ENCODE measurements at regions of chr7 and their contacts with region 1.

Region 1: GRCh38 chr7:100132697-100133151 is 6.0 kb downstream of the MBLAC1 start:
- DNase-seq: peak; percentile 65 to 76 (median 69)
- H3K4me3 ChIP-seq: no peak overlapping the region
- H3K27ac ChIP-seq: no peak overlapping the region
- H3K4me1 ChIP-seq: peaks cover 0 to 14% (median 11%) of the 10 kb centered on the region in 4 experiments
- H3K27me3 ChIP-seq: no peaks in the 10 kb centered on the region

Region 2: GRCh38 chr7:100115026-100115425 is 17.7 kb before region 1 on chr7:
- CTCF ChIA-PET with region 1: interaction called, 10 read pairs
- POLR2A ChIA-PET with region 1: no interaction called
- DNase-seq: no peak
- H3K4me3 ChIP-seq: no peak overlapping the region
- H3K27ac ChIP-seq: no peak overlapping the region
- H3K4me1 ChIP-seq: peaks cover 2 to 14% (median 4%) of the 10 kb centered on the region in 4 experiments
- H3K27me3 ChIP-seq: no peaks in the 10 kb centered on the region

Region 3: GRCh38 chr7:100148559-100149350 is 16.0 kb after region 1 on chr7 and contains the start of gene LAMTOR4:
- CTCF ChIA-PET with region 1: interaction called, 22 read pairs
- POLR2A ChIA-PET with region 1: no interaction called
- DNase-seq: peak; percentile 98 to 99 (median 99)
- H3K4me3 ChIP-seq: peak within 1 kb of the TSS; percentile 64 to 97 (median 92)
- H3K27ac ChIP-seq: peak within 1 kb of the TSS; percentile 70 to 85
- H3K4me1 ChIP-seq: peaks cover 9 to 31% (median 25%) of the 10 kb centered on the region in 4 experiments
- H3K27me3 ChIP-seq: no peaks in the 10 kb centered on the region

Region 4: DNA sequence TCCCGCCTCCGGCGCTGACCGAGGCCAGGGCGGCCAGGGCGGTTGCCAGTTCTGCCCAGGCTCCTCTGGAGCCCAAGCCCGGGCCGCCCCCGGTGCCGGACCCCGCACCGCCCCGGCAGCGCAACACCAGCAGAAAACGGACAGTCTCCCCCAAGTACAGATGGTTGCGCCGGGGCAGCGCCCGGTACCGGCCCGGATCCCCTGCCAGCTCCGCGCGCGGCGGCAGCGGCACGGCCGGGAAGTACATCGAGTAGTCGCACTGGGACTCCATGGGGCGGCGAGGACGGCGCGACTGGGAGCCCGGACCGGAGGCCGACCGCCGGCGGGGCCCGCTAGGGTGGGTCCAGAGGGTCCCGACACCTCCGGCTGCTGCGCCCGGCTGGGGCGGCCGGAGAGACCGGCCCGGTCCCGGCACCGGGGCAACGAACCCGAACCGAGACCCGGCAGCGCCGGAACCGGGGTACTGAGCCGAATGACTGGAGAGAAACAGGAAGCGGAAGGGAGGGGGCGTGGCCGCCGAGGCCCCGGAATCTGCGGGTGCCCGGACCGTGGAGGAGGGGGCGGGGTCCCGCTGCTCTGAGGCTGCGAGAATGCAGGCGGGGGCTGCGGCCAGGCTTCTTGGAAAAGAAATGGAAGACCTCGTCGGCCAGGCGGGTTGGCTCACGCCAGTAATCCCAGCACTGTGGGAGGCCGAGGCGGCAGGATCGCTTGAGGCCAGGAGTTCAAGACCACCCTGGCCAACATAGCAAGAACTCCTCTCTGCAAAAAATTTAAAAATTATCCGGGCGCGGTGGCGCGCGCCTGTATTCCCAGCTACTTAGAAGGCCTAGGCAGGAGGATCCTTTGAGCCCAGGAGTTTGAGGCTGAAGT is 25.7 kb after region 1 on chr7 and contains the start of gene TRAPPC14:
- CTCF ChIA-PET with region 1: interaction called, 21 read pairs
- POLR2A ChIA-PET with region 1: no interaction called
- DNase-seq: peak; percentile 85 to 90 (median 88)
- H3K4me3 ChIP-seq: peak within 1 kb of the TSS; percentile 68 to 91 (median 81)
- H3K27ac ChIP-seq: peak within 1 kb of the TSS; percentile 40 to 76
- H3K4me1 ChIP-seq: peaks cover 0 to 25% (median 21%) of the 10 kb centered on the region in 4 experiments
- H3K27me3 ChIP-seq: peaks cover 0 to 2% (median 0%) of the 10 kb centered on the region in 5 experiments

Region 5: DNA sequence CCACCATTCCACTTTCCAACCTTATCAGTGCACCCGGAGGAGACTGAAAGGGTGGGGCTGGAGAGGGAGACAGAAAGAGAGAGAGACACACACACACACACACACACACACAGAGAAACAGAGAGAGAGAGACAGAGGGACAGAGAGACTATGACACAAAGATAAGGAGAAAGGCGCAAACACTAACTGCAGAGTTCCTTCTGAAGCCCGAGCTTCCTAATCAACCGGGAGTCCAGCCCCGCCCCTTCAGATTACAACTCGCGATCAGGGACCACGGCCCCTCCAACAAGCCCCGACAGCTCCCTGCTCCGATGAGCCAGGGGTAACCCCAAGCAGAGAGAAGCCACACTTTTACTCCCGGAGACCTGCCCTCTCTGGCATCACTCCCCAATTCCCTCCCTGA is 35.2 kb after region 1 on chr7:
- CTCF ChIA-PET with region 1: interaction called, 12 read pairs
- POLR2A ChIA-PET with region 1: no interaction called
- DNase-seq: peak in 1 of 3 donors; percentile 54
- H3K4me3 ChIP-seq: peak overlapping the region in 6 of 7 experiments; percentile 9 to 65 (median 48)
- H3K27ac ChIP-seq: peak overlapping the region in 1 of 2 experiments; percentile 58
- H3K4me1 ChIP-seq: peaks cover 0 to 40% (median 33%) of the 10 kb centered on the region in 4 experiments
- H3K27me3 ChIP-seq: peaks cover 0 to 46% (median 18%) of the 10 kb centered on the region in 5 experiments